ENCODE measurements at regions of chr20 and their contacts with region 1.

Region 1: DNA sequence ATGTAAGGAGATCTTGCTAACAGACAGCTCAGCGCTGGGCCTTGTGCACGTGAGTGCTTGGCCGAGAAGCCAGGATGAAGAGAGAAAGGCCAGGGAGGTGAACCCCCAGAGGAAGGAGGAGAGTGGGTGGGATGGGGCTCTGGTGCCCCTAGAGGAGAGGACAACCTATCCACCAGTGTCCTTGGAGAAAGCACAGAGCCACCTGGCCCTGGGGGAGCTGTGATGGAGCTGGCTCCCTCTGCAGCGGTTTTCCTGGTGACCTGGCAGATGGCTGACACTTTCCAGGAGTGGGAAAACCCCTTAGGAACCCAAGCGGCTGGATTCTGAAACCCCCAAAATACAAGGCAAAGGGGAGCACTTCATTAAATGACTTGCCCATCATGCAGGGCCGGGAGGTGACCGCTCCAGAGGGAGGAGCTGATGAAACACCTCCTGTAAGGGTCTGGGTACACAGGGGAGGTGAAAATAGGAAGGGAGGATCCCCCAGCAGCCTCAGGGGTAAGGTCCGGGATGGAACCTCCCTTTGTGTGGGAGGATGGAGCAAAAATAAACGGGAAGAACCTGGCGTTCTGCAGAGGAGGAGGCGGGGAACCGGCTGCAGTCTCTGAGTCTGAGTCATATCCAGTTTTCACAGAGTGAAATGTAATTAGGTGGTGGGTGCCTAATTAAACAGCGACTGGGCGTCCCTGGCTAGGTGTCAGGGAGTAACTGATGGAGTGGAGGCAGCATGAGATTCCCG is 80.4 kb downstream of the SULF2 start:
- DNase-seq: peak; percentile 34 to 65
- ATAC-seq: peak; percentile 87 to 93 (median 90)
- H3K4me3 ChIP-seq: no peak overlapping the region
- H3K27ac ChIP-seq: peak overlapping the region in 9 of 10 donors; percentile 17 to 67 (median 49)
- H3K4me1 ChIP-seq: peaks cover 2 to 58% (median 13%) of the 10 kb centered on the region in 9 donors
- H3K27me3 ChIP-seq: no peaks in the 10 kb centered on the region
- CTCF ChIP-seq: no peak

Region 2: GRCh38 chr20:47574616-47575364 is 130.1 kb before region 1 on chr20:
- intact Hi-C with region 1: no loop called
- DNase-seq: no peak
- ATAC-seq: peak in 2 of 8 donors; percentile 40 to 41
- H3K4me3 ChIP-seq: no peak overlapping the region
- H3K27ac ChIP-seq: peak overlapping the region in 7 of 10 donors; percentile 33 to 78 (median 72)
- H3K4me1 ChIP-seq: peaks cover 11 to 72% (median 64%) of the 10 kb centered on the region in 9 donors
- H3K27me3 ChIP-seq: no peaks in the 10 kb centered on the region
- CTCF ChIP-seq: no peak

Region 3: DNA sequence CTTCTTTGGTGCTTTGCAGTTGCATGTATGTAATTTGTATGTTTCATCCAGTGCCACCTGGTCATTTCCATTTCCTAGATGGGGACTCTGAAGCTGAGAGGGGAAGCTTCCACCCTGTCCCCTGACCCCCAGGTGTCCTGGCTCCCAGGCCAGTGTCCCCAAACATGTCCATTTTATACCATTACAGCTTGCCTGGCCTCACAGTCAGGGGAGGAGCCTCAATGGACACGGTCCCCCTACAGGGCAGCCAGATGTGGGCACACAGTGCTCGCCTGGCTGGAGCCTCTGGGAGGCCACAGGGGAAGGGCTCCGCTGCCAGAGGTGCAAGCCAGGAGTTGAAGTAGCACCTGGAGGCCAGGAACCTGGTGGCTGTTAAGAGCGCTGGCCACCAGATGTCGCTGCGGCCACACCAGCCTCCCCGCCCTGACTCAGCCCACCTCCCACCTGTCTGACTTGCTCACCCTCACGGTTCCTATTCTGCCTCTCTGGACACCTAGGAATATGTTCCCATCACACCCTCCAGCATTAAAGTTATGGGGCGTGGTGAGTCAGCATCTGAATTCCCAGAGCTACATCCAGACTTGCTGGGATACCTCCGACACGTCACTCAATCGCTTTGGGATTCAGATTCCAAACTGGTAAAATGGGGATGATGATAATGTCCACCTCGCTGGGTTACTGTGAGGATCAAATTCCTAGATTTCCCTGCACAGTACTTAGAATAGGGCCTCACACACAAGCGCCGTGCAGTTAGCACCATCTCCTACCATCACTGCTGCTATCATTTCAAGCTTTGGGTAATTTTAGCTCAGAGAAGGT is 27.1 kb before region 1 on chr20:
- intact Hi-C with region 1: loop called in 1 of 10 experiments (anchors 1 kb)
- DNase-seq: peak; percentile 28 to 52
- ATAC-seq: peak in 3 of 8 donors; percentile 30 to 53 (median 40)
- H3K4me3 ChIP-seq: no peak overlapping the region
- H3K27ac ChIP-seq: no peak overlapping the region
- H3K4me1 ChIP-seq: peaks cover 9 to 32% (median 17%) of the 10 kb centered on the region in 9 donors
- H3K27me3 ChIP-seq: no peaks in the 10 kb centered on the region
- CTCF ChIP-seq: peak; percentile 42 to 80 (median 78)

Region 4: DNA sequence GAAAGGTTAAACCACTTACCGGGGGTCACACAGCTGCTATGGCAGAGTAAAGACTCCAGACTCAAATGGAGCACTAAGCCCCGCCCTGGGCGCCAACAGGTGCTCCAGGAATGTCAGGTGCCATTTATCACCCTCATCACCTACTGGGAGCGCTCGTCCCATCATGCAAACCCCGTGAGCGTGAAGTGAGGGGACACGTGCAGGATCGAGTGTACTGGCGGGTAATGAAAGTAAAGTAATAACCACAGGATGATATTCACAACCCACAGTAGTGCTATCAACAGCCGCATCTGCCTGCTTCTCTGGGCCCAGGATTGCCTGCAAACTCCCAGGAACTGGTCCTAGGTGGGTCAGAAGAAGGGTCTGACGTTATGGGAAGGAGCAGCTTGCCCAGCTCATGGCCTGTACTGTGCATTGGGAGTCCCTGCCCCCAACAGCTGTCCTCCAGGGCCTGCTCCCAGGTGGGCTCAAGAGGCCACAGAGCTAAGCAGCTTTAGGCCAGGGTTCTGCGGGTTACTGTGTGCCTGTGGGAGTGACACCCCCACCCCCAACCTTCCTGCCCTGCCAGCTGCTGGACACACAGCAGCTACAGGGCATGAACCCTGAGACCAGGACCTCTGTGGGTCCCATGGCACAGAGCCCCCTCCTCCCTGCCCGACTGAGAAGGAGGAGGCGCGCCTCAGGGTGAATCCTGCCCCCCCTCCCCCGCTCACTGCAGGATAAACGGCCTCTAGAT is 200.9 kb after region 1 on chr20:
- intact Hi-C with region 1: no loop called
- DNase-seq: no peak
- ATAC-seq: no peak
- H3K4me3 ChIP-seq: no peak overlapping the region
- H3K27ac ChIP-seq: no peak overlapping the region
- H3K4me1 ChIP-seq: no peaks in the 10 kb centered on the region
- H3K27me3 ChIP-seq: peaks cover 0 to 38% (median 15%) of the 10 kb centered on the region in 7 donors
- CTCF ChIP-seq: no peak

Measured in heart right ventricle (tissue), 16 donors.